Posterior cingulate gyrus (tissue), 11 donors: ENCODE measurements at regions of chrX and their contacts with region 1.

Region 1: GRCh38 chrX:115494161-115494560 is 66.8 kb upstream of the PLS3 start:
- DNase-seq: no peak

Region 2: DNA sequence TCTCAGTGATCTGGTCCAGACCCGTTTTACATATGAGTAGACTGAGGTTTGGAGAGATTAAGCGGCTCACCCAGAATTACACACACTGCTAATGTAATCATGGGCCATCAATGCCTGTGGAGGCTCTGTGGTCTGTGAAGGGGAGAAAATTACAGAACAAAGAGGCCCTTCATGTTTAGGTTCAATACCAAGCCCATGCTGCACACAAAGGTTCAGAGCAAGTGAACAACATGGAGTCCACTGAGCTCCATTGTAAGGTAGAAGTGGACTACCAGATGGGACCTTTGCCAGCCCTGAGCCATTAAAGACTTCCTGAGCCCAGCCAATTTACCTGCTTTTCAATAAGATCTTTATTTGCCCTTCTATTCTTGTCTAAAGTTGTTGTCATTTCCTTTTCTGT is 94.9 kb before region 1 on chrX:
- intact Hi-C with region 1: loop called (anchors 5 kb)
- DNase-seq: no peak

Region 3: DNA sequence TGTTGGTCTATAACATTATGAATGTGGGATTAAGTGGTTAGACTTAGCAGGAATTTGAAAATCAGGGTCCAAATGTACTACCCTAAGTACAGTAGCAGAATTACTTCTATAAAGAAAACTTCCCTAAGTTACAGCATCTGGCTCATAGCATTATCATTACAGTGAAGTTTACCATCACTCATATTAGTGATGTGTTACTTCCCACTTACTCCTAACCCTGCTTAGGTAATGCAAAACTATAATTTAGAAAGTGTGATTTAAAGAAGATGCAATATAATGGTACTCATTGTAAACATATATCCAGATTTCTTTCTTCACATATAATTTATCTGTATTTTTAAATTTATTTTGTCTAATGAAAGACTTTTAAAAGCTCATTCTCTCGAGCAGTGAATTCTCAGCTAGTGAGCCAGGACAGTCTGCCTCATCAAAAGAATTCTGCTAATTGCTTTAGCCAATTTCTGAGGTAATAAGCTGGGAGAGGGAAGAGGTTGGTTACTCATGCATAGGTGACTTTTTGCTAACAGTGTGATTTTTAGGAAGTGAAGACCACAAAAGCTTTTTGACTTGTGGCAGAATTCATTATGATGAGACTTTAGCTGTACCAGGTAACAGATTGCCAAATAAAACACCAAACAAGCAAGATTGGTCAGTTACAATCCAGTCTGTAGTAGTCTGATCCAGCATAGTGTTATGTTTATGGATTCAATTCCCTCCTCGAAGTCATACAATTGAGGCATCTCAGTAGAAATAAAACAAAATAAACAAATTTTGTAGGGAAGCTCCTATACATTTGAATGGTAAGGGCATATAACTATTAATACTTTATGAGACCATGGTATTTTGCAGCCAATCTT is 87.8 kb after region 1 on chrX:
- intact Hi-C with region 1: no loop called
- DNase-seq: no peak